PC-3 (cell line): ENCODE measurements at regions of chr6 and their contacts with region 1.

Region 1: GRCh38 chr6:38797391-38797790 is 82.3 kb downstream of the DNAH8 start:
- DNase-seq: peak; percentile 71
- ATAC-seq: peak; percentile 18
- H3K4me3 ChIP-seq: peak overlapping the region; percentile 58; the same call in 1 of the 2 replicates
- H3K27ac ChIP-seq: peak overlapping the region; percentile 89
- H3K4me1 ChIP-seq: peaks cover 67% of the 10 kb centered on the region
- H3K27me3 ChIP-seq: no peaks in the 10 kb centered on the region
- CTCF ChIP-seq: no peak

Region 2: GRCh38 chr6:38750968-38751615 is 46.3 kb before region 1 on chr6:
- CTCF ChIA-PET with region 1: no interaction called
- POLR2A ChIA-PET with region 1: no interaction called
- intact Hi-C with region 1: loop called (anchors 5 kb)
- DNase-seq: peak; percentile 69
- ATAC-seq: peak; percentile 67
- H3K4me3 ChIP-seq: no peak overlapping the region
- H3K27ac ChIP-seq: peak overlapping the region; percentile 46
- H3K4me1 ChIP-seq: peaks cover 28% of the 10 kb centered on the region
- H3K27me3 ChIP-seq: no peaks in the 10 kb centered on the region
- CTCF ChIP-seq: no peak

Region 3: DNA sequence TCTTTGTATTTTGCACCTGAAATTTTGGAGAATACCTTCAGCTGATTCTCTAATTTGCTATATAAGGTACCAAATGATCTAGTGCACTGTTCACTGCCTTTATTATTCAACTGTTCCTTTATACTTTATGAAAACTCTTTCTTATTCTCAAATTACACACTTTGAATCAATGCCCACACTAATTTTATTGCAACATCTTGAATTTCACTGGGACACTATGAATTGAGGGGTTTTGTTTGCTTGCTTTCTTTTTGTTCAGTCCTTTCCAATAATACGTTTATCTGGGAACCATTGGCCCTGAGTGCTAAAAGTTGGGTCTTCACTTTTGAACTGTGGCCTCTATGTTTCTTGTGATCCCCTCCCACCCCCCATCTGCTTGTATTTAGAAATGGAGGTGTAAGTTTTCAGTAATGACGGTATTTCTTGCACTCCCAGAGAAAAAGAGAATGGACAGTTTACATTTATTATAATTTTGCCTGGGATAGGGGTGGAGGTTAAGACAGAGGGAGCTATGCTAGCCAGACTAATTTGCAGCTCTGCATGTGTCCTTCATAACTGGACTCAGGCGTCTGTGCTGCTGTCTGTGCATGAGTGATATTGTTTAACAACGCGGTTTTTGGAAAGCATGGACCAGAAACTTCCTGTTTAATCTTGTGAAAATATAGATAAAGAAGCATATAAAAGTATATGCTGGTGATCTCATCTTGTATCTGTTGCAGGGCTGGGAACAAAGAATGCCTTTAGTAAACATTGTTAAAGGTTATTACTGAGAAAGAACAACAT is 15.8 kb after region 1 on chr6:
- CTCF ChIA-PET with region 1: interaction called, 6 read pairs
- POLR2A ChIA-PET with region 1: interaction called, 5 read pairs
- intact Hi-C with region 1: loop called (anchors 1 kb)
- DNase-seq: peak; percentile 84
- ATAC-seq: peak; percentile 95
- H3K4me3 ChIP-seq: peak overlapping the region; percentile 46
- H3K27ac ChIP-seq: peak overlapping the region; percentile 85
- H3K4me1 ChIP-seq: peaks cover 29% of the 10 kb centered on the region
- H3K27me3 ChIP-seq: peaks cover 8% of the 10 kb centered on the region; the same call in 1 of the 2 replicates
- CTCF ChIP-seq: no peak